Posterior vena cava (tissue), 2 donors: ENCODE measurements at regions of chr14 and their contacts with region 1.

Region 1: DNA sequence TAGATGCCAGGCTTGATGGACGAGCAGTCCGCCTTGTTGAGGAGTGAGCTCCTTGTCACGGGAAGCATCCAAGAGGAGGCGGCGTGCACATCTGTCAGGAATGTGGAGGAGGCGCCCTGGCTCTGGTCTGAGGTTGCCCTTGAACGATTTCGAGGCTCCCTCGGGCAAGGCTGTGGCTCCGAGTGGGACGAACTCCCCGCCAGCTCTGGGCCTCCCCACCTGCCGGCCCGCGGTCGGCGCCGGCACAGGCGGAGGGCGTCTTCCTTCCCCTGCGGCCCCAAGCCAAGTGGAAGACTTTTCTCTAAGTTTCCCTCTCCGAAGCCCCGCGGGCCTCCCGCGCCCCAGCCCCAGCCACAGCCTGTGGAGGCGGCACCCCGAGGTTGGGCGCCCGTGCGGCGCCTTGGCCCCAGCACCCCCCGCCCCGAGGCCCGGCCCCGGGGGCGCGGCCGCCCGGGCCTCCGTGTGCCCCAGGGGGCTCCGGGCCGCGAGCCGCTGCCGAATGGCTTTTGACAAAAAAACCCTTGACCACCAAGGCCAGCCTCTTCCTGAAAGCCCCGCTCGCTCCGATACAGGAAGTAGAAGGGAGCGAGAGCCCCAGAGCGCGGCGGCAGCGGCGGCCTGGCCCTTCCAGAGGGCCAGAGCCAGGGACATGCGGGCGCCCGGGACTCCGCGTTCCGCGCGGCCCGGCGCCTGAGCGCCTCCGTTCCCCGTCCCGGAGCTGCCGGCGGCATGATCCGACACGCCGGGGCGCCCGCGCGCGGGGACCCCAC is at the start of gene RIN3:
- DNase-seq: peak; percentile 89
- total RNA-seq, gene RIN3: 30.9 to 34.0 TPM

Region 2: GRCh38 chr14:92482621-92483319 is 30.6 kb before region 1 on chr14:
- intact Hi-C with region 1: loop called in 1 of 2 experiments (anchors 1 kb)
- DNase-seq: no peak

Region 3: GRCh38 chr14:92585981-92586937 is 72.9 kb after region 1 on chr14:
- intact Hi-C with region 1: loop called in 1 of 2 experiments (anchors 10 kb)
- DNase-seq: peak; percentile 88